ENCODE measurements at regions of chr10 and their contacts with region 1.

Region 1: DNA sequence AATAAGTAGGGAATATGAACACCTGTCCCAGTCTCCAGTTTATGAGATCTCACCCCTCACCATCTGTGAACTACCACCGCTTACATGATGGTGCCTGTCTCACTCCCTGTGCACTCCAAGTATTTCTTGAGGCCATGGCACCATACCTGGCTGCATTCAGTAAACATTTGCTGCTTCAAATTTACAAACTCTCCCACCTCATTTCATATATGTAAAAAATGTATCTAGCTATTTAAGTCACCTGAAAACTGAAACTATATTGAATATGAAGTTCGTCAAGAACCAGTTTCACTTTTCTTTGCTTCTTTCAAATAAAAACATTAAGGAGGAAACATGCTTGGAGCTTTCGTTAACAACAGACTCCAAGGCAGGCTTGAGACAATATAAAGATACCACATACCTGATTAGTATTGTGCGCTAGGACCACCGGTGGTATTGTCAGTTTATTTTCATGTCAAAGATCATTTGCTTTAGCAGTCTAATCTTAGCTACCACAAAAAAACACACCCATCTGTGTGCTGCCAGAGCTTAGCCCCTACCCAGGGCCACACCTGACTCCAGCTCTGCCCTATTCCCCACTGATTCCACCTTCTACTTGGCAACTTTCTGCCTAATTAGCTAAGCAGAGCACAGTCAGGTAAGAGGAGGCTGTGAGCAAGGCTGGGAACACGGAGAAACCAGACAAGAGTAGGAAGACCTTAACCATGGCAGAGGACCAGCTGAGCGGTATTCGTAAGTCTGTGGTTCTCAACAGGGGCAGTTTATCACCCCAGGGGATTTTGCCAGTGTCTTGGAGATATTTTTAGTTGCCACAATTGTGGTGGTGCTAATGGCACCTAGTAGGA is 92.0 kb downstream of the ZFAND4 start:
- DNase-seq: peak; percentile 45
- H3K4me3 Mint-ChIP-seq: peak overlapping the region; percentile 75
- H3K27ac Mint-ChIP-seq: peak overlapping the region; percentile 86
- H3K4me1 Mint-ChIP-seq: peaks cover 30% of the 10 kb centered on the region
- H3K27me3 Mint-ChIP-seq: no peaks in the 10 kb centered on the region

Region 2: GRCh38 chr10:45353186-45353585 is 227.4 kb before region 1 on chr10:
- CTCF ChIA-PET with region 1: no interaction called
- POLR2A ChIA-PET with region 1: no interaction called
- intact Hi-C with region 1: loop called (anchors 10 kb)
- DNase-seq: peak; percentile 17
- H3K4me3 Mint-ChIP-seq: no peak overlapping the region
- H3K27ac Mint-ChIP-seq: peak overlapping the region; percentile 21
- H3K4me1 Mint-ChIP-seq: peaks cover 12% of the 10 kb centered on the region
- H3K27me3 Mint-ChIP-seq: peaks cover 23% of the 10 kb centered on the region

Region 3: DNA sequence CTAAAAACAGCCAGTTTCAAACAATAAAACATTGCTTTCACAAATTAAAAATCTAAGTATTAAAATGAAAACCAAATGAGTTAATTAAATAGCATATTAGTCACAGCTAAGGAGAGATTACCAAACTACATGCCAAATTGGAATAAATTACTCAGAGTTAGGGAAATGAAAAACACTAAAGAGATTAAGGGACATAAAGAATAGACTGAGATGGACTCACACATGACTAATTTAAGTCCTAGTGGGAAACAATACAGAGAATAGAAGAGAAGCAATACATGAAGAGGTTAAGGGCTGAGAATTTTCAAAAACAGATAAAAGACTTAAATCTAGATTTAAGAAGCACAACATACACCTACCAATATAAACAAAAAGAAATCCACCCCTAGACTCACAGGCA is 18.6 kb before region 1 on chr10:
- CTCF ChIA-PET with region 1: interaction called, 7 read pairs
- POLR2A ChIA-PET with region 1: interaction called, 3 read pairs
- intact Hi-C with region 1: loop called (anchors 2 kb)
- DNase-seq: no peak
- H3K4me3 Mint-ChIP-seq: no peak overlapping the region
- H3K27ac Mint-ChIP-seq: no peak overlapping the region
- H3K4me1 Mint-ChIP-seq: peaks cover 25% of the 10 kb centered on the region
- H3K27me3 Mint-ChIP-seq: no peaks in the 10 kb centered on the region

Region 4: GRCh38 chr10:45612741-45613140 is 32.1 kb after region 1 on chr10:
- CTCF ChIA-PET with region 1: no interaction called
- POLR2A ChIA-PET with region 1: no interaction called
- intact Hi-C with region 1: no loop called
- DNase-seq: no peak
- H3K4me3 Mint-ChIP-seq: no peak overlapping the region
- H3K27ac Mint-ChIP-seq: no peak overlapping the region
- H3K4me1 Mint-ChIP-seq: no peaks in the 10 kb centered on the region
- H3K27me3 Mint-ChIP-seq: no peaks in the 10 kb centered on the region

Region 5: GRCh38 chr10:45627412-45628048 is 46.9 kb after region 1 on chr10:
- CTCF ChIA-PET with region 1: no interaction called
- POLR2A ChIA-PET with region 1: no interaction called
- intact Hi-C with region 1: no loop called
- DNase-seq: no peak
- H3K4me3 Mint-ChIP-seq: no peak overlapping the region
- H3K27ac Mint-ChIP-seq: no peak overlapping the region
- H3K4me1 Mint-ChIP-seq: no peaks in the 10 kb centered on the region
- H3K27me3 Mint-ChIP-seq: no peaks in the 10 kb centered on the region

Region 6: GRCh38 chr10:45657033-45657926 is 76.7 kb after region 1 on chr10:
- CTCF ChIA-PET with region 1: no interaction called
- POLR2A ChIA-PET with region 1: no interaction called
- intact Hi-C with region 1: loop called (anchors 5 kb)
- DNase-seq: no peak
- H3K4me3 Mint-ChIP-seq: no peak overlapping the region
- H3K27ac Mint-ChIP-seq: no peak overlapping the region
- H3K4me1 Mint-ChIP-seq: peaks cover 39% of the 10 kb centered on the region
- H3K27me3 Mint-ChIP-seq: no peaks in the 10 kb centered on the region

Region 7: GRCh38 chr10:46273506-46274477 is 693.2 kb after region 1 on chr10:
- CTCF ChIA-PET with region 1: no interaction called
- POLR2A ChIA-PET with region 1: no interaction called
- intact Hi-C with region 1: loop called (anchors 10 kb)
- DNase-seq: peak; percentile 32
- H3K4me3 Mint-ChIP-seq: no peak overlapping the region
- H3K27ac Mint-ChIP-seq: peak overlapping the region; percentile 57
- H3K4me1 Mint-ChIP-seq: peaks cover 40% of the 10 kb centered on the region
- H3K27me3 Mint-ChIP-seq: no peaks in the 10 kb centered on the region